ENCODE measurements at regions of chr4 and their contacts with region 1.

Region 1: GRCh38 chr4:15396157-15396800 is 31.6 kb upstream of the C1QTNF7 start:
- DNase-seq: no peak

Region 2: GRCh38 chr4:15231265-15232091 is 164.8 kb before region 1 on chr4:
- intact Hi-C with region 1: loop called (anchors 5 to 10 kb)
- DNase-seq: peak; percentile 88

Region 3: DNA sequence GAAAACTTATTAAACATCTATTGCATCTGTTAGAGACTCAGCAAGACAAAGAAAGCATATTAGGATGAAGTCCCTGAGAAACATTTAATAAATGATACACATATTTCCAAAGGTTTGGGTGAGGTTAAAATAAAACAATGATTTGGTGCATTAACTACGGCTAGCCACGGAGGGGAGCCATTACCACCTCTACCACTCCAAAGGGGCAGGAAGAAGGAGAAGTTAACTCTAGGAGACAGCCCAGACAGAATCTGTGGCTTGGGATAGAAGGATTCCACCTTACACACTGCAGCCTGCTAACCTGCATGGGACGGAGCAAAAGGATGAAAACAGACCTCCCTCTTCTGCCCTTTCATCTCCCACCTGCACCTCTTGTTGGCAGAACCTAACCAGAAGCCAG is 157.6 kb before region 1 on chr4:
- intact Hi-C with region 1: loop called (anchors 5 to 10 kb)
- DNase-seq: no peak

Measured in posterior vena cava (tissue), 2 donors.